ENCODE measurements at regions of chr4 and their contacts with region 1.

Region 1: DNA sequence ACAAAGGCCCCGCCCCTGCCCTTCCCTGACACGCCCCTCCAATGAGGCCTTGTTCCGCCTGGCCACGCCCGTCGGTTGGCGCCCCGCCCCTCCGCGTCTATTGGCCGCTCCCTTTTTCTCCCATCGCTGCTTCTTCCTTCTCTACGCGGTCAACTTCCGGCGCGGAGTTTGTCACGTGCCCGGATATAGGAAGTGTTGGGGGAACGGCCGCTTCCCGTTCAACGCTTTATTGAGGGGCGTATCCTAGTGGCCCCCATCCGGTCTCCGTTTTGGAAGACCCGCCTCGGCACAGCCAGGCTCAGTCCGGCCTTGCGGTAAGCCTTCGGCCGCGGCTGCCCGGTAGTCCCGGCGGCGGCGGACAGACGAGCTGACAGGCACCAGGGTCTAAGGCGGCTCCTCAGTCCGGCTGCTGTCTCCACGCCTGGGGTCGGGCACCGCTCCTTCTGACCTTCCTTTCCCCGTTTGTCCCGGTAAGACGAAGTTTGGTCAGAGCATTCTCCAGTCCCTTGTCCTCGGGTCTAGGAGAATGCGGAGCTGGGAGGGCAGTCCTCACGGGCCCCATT is at the start of gene EXOC1:
- DNase-seq: peak; percentile 95 to 99
- H3K4me3 ChIP-seq: peak within 1 kb of the TSS; percentile 90 to 93
- H3K27ac ChIP-seq: peak within 1 kb of the TSS; percentile 87 to 96
- H3K4me1 ChIP-seq: peaks cover 0 to 7% of the 10 kb centered on the region in 2 donors
- H3K27me3 ChIP-seq: no peaks in the 10 kb centered on the region
- CTCF ChIP-seq: no peak
- total RNA-seq, gene EXOC1: 13.6 TPM

Region 2: GRCh38 chr4:55546756-55547465 is 306.7 kb before region 1 on chr4 and contains the start of gene CLOCK:
- intact Hi-C with region 1: loop called (anchors 1 kb)
- DNase-seq: peak; percentile 39 to 91
- H3K4me3 ChIP-seq: peak within 1 kb of the TSS; percentile 87 to 91
- H3K27ac ChIP-seq: peak within 1 kb of the TSS; percentile 96 to 97
- H3K4me1 ChIP-seq: peaks cover 0 to 18% of the 10 kb centered on the region in 2 donors
- H3K27me3 ChIP-seq: no peaks in the 10 kb centered on the region
- CTCF ChIP-seq: peak; percentile 39 to 58 (median 57)
- total RNA-seq, gene CLOCK: 17.6 TPM

Region 3: DNA sequence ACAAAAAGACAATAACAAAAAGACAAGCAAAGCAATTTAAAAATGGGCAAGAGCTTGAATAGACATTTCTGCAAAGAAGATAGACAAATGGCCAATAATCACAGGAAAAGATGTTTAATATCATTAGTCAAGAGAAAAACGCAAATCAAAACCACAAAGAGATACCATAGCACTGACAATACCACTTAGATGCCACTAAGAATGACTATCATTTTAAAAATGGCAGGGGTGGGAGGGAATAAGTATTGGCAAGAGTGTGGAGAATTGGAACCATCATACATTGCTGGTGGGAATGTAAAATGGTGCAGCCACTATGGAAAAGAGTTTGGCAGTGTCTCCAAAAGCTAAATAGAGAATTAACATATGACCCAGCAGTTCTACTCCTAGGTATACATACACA is 15.2 kb before region 1 on chr4:
- intact Hi-C with region 1: no loop called
- DNase-seq: no peak
- H3K4me3 ChIP-seq: no peak overlapping the region
- H3K27ac ChIP-seq: no peak overlapping the region
- H3K4me1 ChIP-seq: no peaks in the 10 kb centered on the region
- H3K27me3 ChIP-seq: no peaks in the 10 kb centered on the region
- CTCF ChIP-seq: no peak

Region 4: GRCh38 chr4:55866973-55867574 is 13.5 kb after region 1 on chr4:
- intact Hi-C with region 1: loop called (anchors 1 kb)
- DNase-seq: no peak
- H3K4me3 ChIP-seq: peak overlapping the region in 1 of 2 donors; percentile 14
- H3K27ac ChIP-seq: peak overlapping the region; percentile 77
- H3K4me1 ChIP-seq: peaks cover 2 to 11% of the 10 kb centered on the region in 2 donors
- H3K27me3 ChIP-seq: no peaks in the 10 kb centered on the region
- CTCF ChIP-seq: peak; percentile 29 to 70 (median 59)

Region 5: DNA sequence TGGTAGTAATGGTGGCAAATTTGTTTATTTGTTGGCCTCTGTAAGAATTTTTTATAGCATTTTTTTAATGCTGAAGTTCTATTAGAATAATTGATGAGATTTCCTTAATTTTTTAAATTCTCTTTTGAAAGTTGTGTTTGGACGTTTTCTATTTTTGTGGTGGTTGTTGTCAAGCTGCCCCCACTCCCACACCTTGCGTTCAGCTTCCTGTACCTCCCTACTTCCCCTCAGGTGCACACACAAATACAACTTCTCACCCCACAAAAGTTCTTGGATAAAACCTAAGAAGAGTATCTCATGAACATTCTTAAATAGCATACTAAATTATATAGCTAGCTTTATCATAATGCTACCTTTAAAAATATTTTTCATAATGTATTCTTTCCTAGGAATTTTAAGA is 38.6 kb after region 1 on chr4:
- intact Hi-C with region 1: loop called (anchors 2 kb)
- DNase-seq: no peak
- H3K4me3 ChIP-seq: no peak overlapping the region
- H3K27ac ChIP-seq: no peak overlapping the region
- H3K4me1 ChIP-seq: no peaks in the 10 kb centered on the region
- H3K27me3 ChIP-seq: no peaks in the 10 kb centered on the region
- CTCF ChIP-seq: no peak

Region 6: DNA sequence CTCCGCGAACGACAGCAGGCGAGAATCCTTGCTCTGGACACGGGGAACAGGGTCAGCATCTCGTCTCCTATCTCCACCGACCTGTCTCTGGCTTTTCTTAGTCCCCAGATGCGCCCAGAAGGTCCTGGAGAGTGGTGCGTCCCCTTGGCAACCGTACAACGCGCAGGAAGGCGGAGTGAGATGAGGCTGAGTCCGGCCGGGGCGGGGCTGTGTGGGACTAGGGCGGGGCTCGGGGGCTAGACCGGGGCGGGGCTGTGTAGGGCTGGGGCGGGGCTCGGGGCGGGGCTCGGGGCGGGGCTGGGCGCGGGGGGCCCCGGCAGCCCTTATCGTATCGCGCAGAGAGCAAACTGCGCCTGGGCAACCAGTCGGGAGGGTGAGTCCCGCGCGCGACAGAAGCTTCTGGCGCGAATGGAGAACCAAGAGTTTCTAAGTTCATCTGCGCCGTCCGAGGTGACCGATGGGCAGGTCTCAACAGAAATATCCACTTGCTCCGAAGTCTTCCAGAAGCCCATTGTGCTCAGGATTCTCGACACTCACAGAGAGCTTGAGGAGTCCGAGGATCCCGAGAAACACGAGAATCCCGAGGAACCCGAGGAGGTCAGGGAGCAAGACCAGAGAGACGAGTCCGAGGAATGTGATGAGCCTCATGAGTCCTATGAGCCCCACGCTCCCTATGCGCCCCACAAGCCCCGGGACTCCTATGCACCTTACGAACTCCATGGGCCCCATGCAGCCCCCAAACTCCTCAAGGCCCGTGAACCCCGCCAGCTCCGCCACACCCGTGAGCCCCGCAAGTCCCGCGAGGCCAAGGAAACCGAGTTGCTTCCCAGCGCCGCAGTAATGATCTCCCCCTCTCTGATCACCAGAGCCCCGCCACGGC is 676.9 kb after region 1 on chr4:
- intact Hi-C with region 1: loop called (anchors 5 kb)
- DNase-seq: peak; percentile 48 to 93
- H3K4me3 ChIP-seq: peak overlapping the region; percentile 55 to 63
- H3K27ac ChIP-seq: no peak overlapping the region
- H3K4me1 ChIP-seq: peaks cover 0 to 7% of the 10 kb centered on the region in 2 donors
- H3K27me3 ChIP-seq: no peaks in the 10 kb centered on the region
- CTCF ChIP-seq: no peak

Region 7: DNA sequence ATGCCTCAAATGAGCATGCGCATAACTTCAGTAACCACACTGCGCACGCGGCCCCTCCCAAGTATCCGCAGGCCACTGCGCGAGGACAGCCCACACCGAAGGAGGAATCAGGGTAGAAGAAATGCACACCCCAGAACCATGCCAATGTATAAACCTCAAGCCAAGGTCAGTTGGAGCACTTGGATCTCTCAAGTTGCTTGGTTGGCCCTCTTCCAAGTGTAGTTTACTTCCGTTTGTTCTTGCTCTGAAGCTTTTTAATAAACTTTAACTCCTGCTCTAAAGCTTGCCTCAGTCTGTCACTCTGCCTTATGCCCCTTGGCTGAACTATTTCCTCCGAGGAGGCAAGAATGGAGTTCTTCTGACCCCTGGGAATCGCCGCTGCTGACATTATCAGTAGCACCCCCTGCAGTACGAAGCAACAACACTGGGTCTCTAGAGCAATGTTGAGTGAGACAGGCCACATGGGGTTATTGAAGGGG is 989.9 kb after region 1 on chr4:
- intact Hi-C with region 1: no loop called
- DNase-seq: no peak
- H3K4me3 ChIP-seq: no peak overlapping the region
- H3K27ac ChIP-seq: no peak overlapping the region
- H3K4me1 ChIP-seq: no peaks in the 10 kb centered on the region
- H3K27me3 ChIP-seq: no peaks in the 10 kb centered on the region
- CTCF ChIP-seq: no peak